Activated B cell treated with CpG ODN at 0.5 μM for 24 hours (primary cell): ENCODE measurements at regions of chr6 and their contacts with region 1.

Region 1: DNA sequence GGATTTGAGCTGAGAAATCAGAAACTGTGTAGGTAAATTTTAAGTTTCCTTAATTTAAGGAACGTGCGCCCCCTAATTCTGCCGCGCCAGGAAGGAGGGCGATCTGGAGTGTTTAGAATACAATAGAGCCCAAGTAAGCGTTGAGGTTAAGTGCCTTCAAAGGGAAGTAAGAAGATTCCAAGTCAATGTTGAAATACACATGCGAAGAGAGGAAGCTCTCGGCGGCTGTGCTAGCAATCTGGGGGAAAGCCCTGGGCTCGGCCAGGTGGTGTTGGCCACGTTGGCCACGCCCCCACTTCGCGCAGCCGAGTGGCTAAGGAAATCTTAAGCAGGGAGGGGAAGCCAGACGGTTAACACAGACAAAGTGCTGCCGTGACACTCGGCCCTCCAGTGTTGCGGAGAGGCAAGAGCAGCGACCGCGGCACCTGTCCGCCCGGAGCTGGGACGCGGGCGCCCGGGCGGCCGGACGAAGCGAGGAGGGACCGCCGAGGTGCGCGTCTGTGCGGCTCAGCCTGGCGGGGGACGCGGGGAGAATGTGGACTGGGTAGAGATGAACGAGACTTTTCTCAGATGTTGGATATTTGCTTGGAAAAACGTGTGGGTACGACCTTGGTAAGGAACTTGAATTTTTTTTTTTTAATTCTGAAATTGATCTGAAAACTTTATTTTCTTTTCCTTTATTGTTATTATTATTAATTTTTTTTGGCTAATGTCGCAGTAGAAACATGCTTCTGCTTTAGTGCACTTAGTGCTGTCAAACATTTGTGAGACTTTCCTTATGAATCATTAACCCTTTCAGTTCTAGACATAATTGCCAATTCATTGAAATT is at the start of gene PRDM1:
- DNase-seq: peak; percentile 84
- ATAC-seq: peak; percentile 87
- H3K4me3 Mint-ChIP-seq: peak within 1 kb of the TSS; percentile 90
- H3K27ac Mint-ChIP-seq: peak within 1 kb of the TSS; percentile 84
- H3K4me1 Mint-ChIP-seq: peaks cover 66% of the 10 kb centered on the region
- H3K27me3 Mint-ChIP-seq: peaks cover 5% of the 10 kb centered on the region
- CTCF ChIP-seq: no peak
- total RNA-seq, gene PRDM1: 16.3 and 16.4 TPM in 2 replicates

Region 2: DNA sequence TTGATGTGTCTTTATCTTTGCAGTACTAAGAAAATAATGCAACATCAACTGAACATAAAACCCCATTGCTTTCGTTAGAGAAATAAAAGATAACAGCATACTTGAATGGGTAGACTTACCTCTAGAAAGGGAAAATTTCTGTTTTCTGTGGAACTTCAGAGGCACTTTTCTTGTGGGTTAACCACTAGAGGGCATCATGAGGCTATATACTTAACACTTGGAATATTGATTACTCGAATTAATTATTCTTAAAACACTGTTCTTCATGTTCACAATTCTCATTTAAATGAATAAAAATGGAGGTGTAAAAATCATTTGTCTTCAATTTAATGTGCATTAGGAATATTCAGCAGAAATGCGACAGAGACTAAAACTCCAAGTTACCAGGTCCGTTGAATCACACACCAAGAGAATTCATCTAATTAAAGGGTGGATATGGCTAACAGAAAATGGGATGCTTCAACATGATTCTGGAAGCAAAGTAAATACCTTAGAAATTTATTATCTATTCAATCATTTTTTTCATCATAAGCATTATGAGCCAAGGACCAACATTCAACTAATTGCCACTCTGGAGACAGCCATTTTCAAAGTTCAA is 352.5 kb before region 1 on chr6:
- CTCF ChIA-PET with region 1: interaction called, 6 read pairs
- POLR2A ChIA-PET with region 1: interaction called, 3 read pairs
- intact Hi-C with region 1: loop called (anchors 1 kb)
- DNase-seq: no peak
- ATAC-seq: no peak
- H3K4me3 Mint-ChIP-seq: no peak overlapping the region
- H3K27ac Mint-ChIP-seq: no peak overlapping the region
- H3K4me1 Mint-ChIP-seq: no peaks in the 10 kb centered on the region
- H3K27me3 Mint-ChIP-seq: no peaks in the 10 kb centered on the region
- CTCF ChIP-seq: peak; percentile 39

Region 3: DNA sequence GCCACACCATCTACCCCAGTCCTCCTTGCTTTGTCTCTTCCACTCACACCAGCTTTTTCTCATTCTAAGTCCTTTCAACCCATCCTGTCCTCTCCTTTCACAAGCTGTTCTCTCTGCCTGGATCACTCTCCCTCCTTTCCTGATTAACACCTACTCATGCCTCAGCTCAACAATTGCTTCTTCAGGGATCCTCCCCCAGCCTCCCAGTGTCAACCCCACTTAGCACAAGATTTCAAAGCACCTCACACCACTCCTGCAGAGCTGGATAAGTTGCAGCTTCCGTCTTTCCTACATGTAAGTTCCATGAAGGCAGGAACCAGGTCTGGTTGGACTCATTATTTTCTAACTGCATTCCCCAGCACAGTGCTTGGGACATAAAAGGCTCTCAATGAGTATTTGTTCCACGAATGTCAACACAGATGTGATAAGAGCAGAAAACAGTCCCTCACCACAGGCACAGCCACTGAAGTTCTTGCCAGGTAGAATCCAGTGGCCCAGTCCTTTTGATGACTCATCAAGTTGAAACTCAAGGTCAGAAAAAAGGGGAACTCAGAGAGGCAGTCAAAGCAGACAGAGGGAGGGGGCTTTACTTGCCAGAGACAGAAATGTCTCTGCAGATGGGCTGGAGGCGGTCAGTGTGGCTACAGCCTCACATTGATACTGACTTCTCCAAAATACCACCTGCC is 193.5 kb before region 1 on chr6:
- CTCF ChIA-PET with region 1: no interaction called
- POLR2A ChIA-PET with region 1: interaction called, 10 read pairs
- intact Hi-C with region 1: loop called (anchors 1 kb)
- DNase-seq: no peak
- ATAC-seq: peak; percentile 91
- H3K4me3 Mint-ChIP-seq: peak overlapping the region; percentile 15
- H3K27ac Mint-ChIP-seq: peak overlapping the region; percentile 68
- H3K4me1 Mint-ChIP-seq: peaks cover 18% of the 10 kb centered on the region
- H3K27me3 Mint-ChIP-seq: no peaks in the 10 kb centered on the region
- CTCF ChIP-seq: no peak

Region 4: GRCh38 chr6:106097411-106098231 is 11.4 kb after region 1 on chr6:
- CTCF ChIA-PET with region 1: interaction called, 4 read pairs
- POLR2A ChIA-PET with region 1: interaction called, 80 read pairs
- intact Hi-C with region 1: loop called (anchors 1 kb)
- DNase-seq: no peak
- ATAC-seq: peak; percentile 74
- H3K4me3 Mint-ChIP-seq: peak overlapping the region; percentile 89
- H3K27ac Mint-ChIP-seq: peak overlapping the region; percentile 94
- H3K4me1 Mint-ChIP-seq: peaks cover 84% of the 10 kb centered on the region
- H3K27me3 Mint-ChIP-seq: no peaks in the 10 kb centered on the region
- CTCF ChIP-seq: no peak

Region 5: DNA sequence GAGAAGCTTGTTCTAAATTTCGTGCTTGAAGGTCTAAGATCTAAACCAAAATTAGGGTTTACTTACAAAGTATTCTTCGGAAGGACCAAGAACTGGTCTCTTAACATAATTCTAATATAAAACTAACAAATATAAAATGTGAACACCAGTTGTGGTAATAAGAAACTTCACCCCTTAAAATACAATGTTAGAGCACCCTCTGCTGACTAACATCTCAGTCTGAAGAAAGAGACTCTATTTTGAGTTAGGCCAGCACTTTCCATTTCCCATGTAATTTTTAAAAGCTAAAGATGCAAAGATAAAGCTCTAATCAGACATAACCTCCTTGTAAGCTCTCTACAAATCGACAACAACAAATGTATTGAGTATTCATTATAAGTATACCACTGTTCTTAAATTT is 214.7 kb after region 1 on chr6:
- CTCF ChIA-PET with region 1: interaction called, 5 read pairs
- POLR2A ChIA-PET with region 1: no interaction called
- intact Hi-C with region 1: loop called (anchors 1 kb)
- DNase-seq: no peak
- ATAC-seq: no peak
- H3K4me3 Mint-ChIP-seq: no peak overlapping the region
- H3K27ac Mint-ChIP-seq: no peak overlapping the region
- H3K4me1 Mint-ChIP-seq: no peaks in the 10 kb centered on the region
- H3K27me3 Mint-ChIP-seq: no peaks in the 10 kb centered on the region
- CTCF ChIP-seq: no peak

Region 6: DNA sequence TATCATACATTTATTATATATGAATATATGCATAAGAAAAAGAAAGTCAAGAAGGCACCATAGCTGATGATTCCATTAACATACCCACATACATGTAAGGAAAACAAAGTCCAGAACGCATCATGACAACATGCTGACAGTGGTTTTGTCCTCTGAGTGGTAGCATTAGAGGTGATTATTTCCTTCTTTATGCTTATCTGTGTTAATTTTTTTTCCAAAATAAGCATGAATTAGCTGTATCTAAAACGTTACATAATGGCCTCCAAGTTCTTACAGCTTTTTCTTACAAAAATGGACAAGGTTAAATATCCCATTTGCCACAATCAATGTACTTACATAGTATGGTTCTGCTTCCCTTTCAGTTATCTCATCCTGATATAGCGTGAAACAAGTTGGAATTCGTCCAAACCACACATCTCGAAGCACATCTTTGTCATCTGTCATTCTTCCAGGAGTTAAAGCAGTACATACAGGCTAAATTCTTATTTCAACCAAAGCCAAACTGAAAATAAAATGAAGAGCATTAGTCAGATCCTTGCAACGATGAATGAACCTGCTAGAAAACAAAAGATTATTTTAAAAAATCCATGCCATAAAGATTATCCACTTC is 229.7 kb after region 1 on chr6:
- CTCF ChIA-PET with region 1: no interaction called
- POLR2A ChIA-PET with region 1: no interaction called
- intact Hi-C with region 1: no loop called
- DNase-seq: no peak
- ATAC-seq: no peak
- H3K4me3 Mint-ChIP-seq: no peak overlapping the region
- H3K27ac Mint-ChIP-seq: no peak overlapping the region
- H3K4me1 Mint-ChIP-seq: peaks cover 35% of the 10 kb centered on the region
- H3K27me3 Mint-ChIP-seq: no peaks in the 10 kb centered on the region
- CTCF ChIP-seq: no peak

Region 7: GRCh38 chr6:106347341-106347740 is 261.1 kb after region 1 on chr6:
- CTCF ChIA-PET with region 1: no interaction called
- POLR2A ChIA-PET with region 1: no interaction called
- intact Hi-C with region 1: no loop called
- DNase-seq: no peak
- ATAC-seq: no peak
- H3K4me3 Mint-ChIP-seq: no peak overlapping the region
- H3K27ac Mint-ChIP-seq: no peak overlapping the region
- H3K4me1 Mint-ChIP-seq: no peaks in the 10 kb centered on the region
- H3K27me3 Mint-ChIP-seq: peaks cover 13% of the 10 kb centered on the region
- CTCF ChIP-seq: no peak